Activated CD4-positive, alpha-beta T cell treated with anti-CD3 and anti-CD28 coated beads, Interleukin-2, amount 10 ng/mL, durations not matched to agents 24 days and 14 days (primary cell): ENCODE measurements at regions of chr5 and their contacts with region 1.

Region 1: DNA sequence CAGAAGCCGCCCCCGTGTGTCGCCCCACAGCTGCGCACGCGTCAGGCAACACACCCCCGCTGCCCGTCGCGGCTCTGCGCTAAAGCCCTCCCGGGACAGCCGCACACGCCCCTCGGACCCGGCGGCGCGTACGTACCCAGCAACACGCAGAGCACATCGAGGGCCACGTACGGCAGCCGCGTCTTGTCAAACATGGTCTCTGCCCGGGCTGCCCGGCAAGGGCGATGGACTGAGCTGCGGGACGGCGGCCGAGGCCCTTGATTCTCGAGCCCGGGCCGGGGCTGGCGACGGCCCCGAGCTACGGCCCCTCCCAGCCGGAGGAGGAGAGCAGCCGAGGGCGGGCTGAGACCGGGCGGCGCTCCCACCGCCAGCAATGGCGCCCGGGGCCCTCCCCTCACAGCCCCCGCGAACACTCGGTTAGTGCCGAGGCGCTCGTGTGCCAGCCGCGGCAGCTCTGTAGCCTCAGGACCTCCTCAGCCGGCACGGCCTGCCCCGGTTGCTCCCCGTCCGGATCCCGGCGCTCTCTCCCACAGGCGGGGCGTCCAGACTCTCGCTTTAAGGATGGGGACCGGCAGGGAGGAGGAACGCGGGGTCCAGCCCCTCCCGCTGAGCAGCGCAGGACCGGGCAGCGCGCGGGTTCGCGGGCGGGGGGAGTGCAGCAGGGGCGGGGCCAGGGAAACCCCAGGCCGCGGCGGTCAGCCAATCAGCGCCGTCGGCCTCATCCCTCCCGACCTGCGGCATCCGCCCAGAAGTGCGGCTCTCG is at the start of gene PLPP1:
- DNase-seq: peak; percentile 96
- H3K4me3 Mint-ChIP-seq: peak within 1 kb of the TSS; percentile 91
- H3K27ac Mint-ChIP-seq: peak within 1 kb of the TSS; percentile 86
- H3K4me1 Mint-ChIP-seq: peaks cover 39% of the 10 kb centered on the region
- H3K27me3 Mint-ChIP-seq: no peaks in the 10 kb centered on the region
- total RNA-seq, gene PLPP1: 29.7 and 33.9 TPM in 2 replicates

Region 2: GRCh38 chr5:55172051-55172899 is 362.3 kb before region 1 on chr5:
- intact Hi-C with region 1: loop called (anchors 5 kb)
- DNase-seq: peak; percentile 91
- H3K4me3 Mint-ChIP-seq: peak overlapping the region; percentile 86
- H3K27ac Mint-ChIP-seq: no peak overlapping the region
- H3K4me1 Mint-ChIP-seq: peaks cover 33% of the 10 kb centered on the region
- H3K27me3 Mint-ChIP-seq: peaks cover 72% of the 10 kb centered on the region

Region 3: DNA sequence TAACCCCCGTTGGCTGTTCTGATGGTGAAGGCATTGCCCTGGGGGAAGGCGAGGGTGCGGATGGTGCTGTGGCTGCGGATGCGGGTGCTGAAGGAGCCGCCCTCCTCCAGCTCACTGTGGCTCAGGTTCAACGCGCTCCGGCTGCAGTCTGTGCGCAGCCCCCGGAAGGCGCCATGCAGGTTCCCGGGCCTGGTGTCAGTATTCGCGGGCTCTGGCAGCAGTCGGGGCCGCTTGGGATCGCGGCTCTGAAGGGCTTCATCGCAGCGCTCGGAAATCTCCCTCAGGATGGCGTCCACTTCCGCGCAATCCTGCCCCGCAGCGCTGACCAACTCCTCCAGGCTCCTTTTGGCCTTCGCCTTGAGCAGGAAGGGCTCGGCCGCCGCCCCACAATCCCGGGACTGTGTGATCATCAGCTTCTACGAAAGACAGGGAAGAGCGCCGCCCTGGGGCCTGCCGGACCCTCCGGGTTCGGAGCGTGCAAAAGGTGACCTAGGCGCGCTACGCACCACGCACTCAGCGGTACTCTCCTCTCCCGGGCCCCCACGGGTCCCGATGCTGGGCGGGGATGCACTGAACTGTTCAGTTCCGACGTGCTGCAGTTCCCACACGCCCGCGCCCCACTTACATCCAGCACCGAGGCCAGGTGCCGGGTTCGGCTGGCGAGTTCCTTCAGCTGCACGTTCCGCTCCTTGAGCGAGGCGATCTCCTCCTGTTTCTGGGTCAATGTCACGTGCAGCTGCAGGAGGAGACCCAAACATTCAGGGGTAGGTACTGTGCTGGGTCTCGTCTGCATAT is 314.0 kb before region 1 on chr5:
- intact Hi-C with region 1: no loop called
- DNase-seq: peak; percentile 67
- H3K4me3 Mint-ChIP-seq: peak overlapping the region; percentile 77
- H3K27ac Mint-ChIP-seq: peak overlapping the region; percentile 15
- H3K4me1 Mint-ChIP-seq: peaks cover 18% of the 10 kb centered on the region
- H3K27me3 Mint-ChIP-seq: peaks cover 79% of the 10 kb centered on the region

Region 4: GRCh38 chr5:55338810-55339243 is 195.8 kb before region 1 on chr5:
- intact Hi-C with region 1: loop called (anchors 10 kb)
- DNase-seq: peak; percentile 64
- H3K4me3 Mint-ChIP-seq: peak overlapping the region; percentile 55
- H3K27ac Mint-ChIP-seq: peak overlapping the region; percentile 85
- H3K4me1 Mint-ChIP-seq: peaks cover 20% of the 10 kb centered on the region
- H3K27me3 Mint-ChIP-seq: no peaks in the 10 kb centered on the region

Region 5: DNA sequence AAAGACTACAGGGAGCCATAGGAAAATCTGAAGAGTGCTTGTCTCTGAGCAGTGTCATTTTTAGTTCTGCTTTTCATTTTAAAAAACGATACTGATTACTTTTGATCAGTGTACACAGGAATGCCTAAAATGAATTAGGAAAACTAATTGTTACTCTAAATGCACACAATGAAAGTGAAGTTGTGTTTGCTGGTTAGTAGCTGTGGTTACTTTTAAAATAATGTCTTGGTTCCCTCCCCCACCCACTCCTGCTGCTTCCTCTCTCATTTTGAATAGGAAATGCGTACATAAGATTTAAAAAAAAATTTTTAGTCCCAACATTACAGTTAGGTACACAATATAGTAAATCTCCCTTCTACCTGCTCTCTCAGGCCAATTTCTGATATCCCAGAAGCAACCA is 47.6 kb after region 1 on chr5:
- intact Hi-C with region 1: loop called (anchors 2 kb)
- DNase-seq: no peak
- H3K4me3 Mint-ChIP-seq: peak overlapping the region; percentile 42
- H3K27ac Mint-ChIP-seq: no peak overlapping the region
- H3K4me1 Mint-ChIP-seq: peaks cover 38% of the 10 kb centered on the region
- H3K27me3 Mint-ChIP-seq: no peaks in the 10 kb centered on the region

Region 6: GRCh38 chr5:55601204-55601618 is 66.6 kb after region 1 on chr5:
- intact Hi-C with region 1: loop called (anchors 2 kb)
- DNase-seq: peak; percentile 66
- H3K4me3 Mint-ChIP-seq: peak overlapping the region; percentile 45
- H3K27ac Mint-ChIP-seq: peak overlapping the region; percentile 78
- H3K4me1 Mint-ChIP-seq: peaks cover 51% of the 10 kb centered on the region
- H3K27me3 Mint-ChIP-seq: no peaks in the 10 kb centered on the region